CD4-positive, alpha-beta T cell (primary cell): ENCODE measurements at regions of chr12 and their contacts with region 1.

Region 1: GRCh38 chr12:12432364-12432763 is 75.5 kb downstream of the BORCS5 start:
- DNase-seq: no peak
- ATAC-seq: no peak
- H3K4me3 ChIP-seq: no peak overlapping the region
- H3K4me3 Mint-ChIP-seq: no peak overlapping the region
- H3K27ac ChIP-seq: no peak overlapping the region
- H3K27ac Mint-ChIP-seq: peak overlapping the region; percentile 68
- H3K4me1 ChIP-seq: peaks cover 30% of the 10 kb centered on the region
- H3K4me1 Mint-ChIP-seq: peaks cover 74% of the 10 kb centered on the region
- H3K27me3 ChIP-seq: no peaks in the 10 kb centered on the region
- H3K27me3 Mint-ChIP-seq: no peaks in the 10 kb centered on the region
- CTCF ChIP-seq: no peak

Region 2: DNA sequence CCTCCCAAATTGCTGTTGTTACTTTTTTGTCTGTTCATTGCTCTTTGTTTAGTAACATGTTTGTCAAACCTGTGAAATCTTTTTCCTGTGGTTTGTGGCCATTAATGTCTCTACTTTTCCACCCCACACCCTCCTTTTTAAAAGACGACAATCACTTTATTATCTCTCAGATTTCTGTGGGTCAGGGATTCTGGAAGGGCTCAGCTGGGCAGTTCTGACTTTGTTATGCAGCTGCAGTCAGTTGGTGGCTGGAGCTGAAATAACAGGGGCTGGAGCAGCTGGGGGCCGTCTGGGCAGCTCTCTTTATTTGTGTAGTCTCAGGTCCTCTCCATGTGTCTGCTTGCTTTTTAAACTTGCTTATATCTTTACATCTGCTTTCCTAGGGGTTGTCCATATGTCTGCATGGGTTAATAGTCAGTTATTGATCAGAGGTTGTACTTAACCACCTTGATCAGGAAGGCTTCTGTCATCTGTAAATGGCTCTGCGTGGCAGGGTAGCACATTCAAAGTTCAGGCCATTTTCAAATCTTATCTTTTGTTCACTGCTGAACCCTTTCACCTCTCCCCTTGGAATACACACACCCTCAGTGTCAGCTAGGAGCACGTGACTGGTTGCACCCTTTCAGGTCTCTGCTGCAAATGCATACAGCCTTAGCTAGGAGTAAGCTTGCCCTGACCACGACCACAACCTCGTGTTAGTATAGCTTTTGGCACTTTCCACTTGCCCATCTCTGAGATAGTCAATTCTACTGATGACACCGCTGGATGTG is 47.6 kb before region 1 on chr12:
- CTCF ChIA-PET with region 1: no interaction called
- POLR2A ChIA-PET with region 1: interaction called, 3 read pairs
- intact Hi-C with region 1: loop called in 1 of 2 experiments (anchors 2 kb)
- DNase-seq: peak in 5 of 14 experiments; percentile 17 to 70 (median 32)
- ATAC-seq: peak; percentile 19
- H3K4me3 ChIP-seq: no peak overlapping the region
- H3K4me3 Mint-ChIP-seq: peak overlapping the region; percentile 56
- H3K27ac ChIP-seq: peak overlapping the region in 1 of 2 donors; percentile 65
- H3K27ac Mint-ChIP-seq: peak overlapping the region; percentile 79
- H3K4me1 ChIP-seq: peaks cover 15% of the 10 kb centered on the region
- H3K4me1 Mint-ChIP-seq: peaks cover 61% of the 10 kb centered on the region
- H3K27me3 ChIP-seq: no peaks in the 10 kb centered on the region
- H3K27me3 Mint-ChIP-seq: no peaks in the 10 kb centered on the region
- CTCF ChIP-seq: no peak

Region 3: DNA sequence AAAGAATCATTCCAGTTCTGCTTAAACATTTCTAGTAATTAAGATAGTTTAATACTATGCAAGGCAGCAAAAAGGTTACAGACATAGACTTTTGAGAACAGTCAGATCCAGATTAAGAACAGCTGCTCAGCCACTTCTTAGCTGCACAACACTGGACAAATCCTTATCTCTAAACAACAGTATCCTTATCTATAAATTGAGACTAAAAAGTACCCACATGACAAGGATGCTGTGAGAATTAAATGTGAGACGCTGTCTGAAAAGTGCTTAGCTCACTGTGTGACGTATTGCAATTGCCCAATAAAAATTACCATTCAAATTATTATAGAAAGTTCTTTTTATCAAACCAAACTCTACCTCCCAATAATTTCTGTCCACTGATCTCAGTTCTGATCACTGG is 40.0 kb before region 1 on chr12:
- CTCF ChIA-PET with region 1: no interaction called
- POLR2A ChIA-PET with region 1: no interaction called
- intact Hi-C with region 1: loop called in 1 of 2 experiments (anchors 5 kb)
- DNase-seq: no peak
- ATAC-seq: no peak
- H3K4me3 ChIP-seq: no peak overlapping the region
- H3K4me3 Mint-ChIP-seq: no peak overlapping the region
- H3K27ac ChIP-seq: no peak overlapping the region
- H3K27ac Mint-ChIP-seq: no peak overlapping the region
- H3K4me1 ChIP-seq: peaks cover 4% of the 10 kb centered on the region
- H3K4me1 Mint-ChIP-seq: peaks cover 35% of the 10 kb centered on the region
- H3K27me3 ChIP-seq: no peaks in the 10 kb centered on the region
- H3K27me3 Mint-ChIP-seq: no peaks in the 10 kb centered on the region
- CTCF ChIP-seq: no peak

Region 4: GRCh38 chr12:12449467-12450025 is 17.2 kb after region 1 on chr12:
- CTCF ChIA-PET with region 1: no interaction called
- POLR2A ChIA-PET with region 1: no interaction called
- intact Hi-C with region 1: no loop called
- DNase-seq: peak in 2 of 14 experiments; percentile 51 to 61
- ATAC-seq: no peak
- H3K4me3 ChIP-seq: no peak overlapping the region
- H3K4me3 Mint-ChIP-seq: no peak overlapping the region
- H3K27ac ChIP-seq: no peak overlapping the region
- H3K27ac Mint-ChIP-seq: no peak overlapping the region
- H3K4me1 ChIP-seq: peaks cover 15% of the 10 kb centered on the region
- H3K4me1 Mint-ChIP-seq: peaks cover 28% of the 10 kb centered on the region
- H3K27me3 ChIP-seq: no peaks in the 10 kb centered on the region
- H3K27me3 Mint-ChIP-seq: no peaks in the 10 kb centered on the region
- CTCF ChIP-seq: no peak